ENCODE measurements at regions of chr13 and their contacts with region 1.

Region 1: GRCh38 chr13:44969551-44970484 is 19.5 kb downstream of the NUFIP1 start:
- DNase-seq: peak; percentile 53
- H3K4me3 ChIP-seq: no peak overlapping the region
- H3K27ac ChIP-seq: peak overlapping the region; percentile 1 to 45; a peak in 2 of 4 replicates
- H3K4me1 ChIP-seq: peaks cover 0 to 17% of the 10 kb centered on the region in 2 experiments; a peak in 2 of 4 replicates
- H3K27me3 ChIP-seq: no peaks in the 10 kb centered on the region
- CTCF ChIP-seq: peak; percentile 89
- EP300 ChIP-seq: no peak
- RAD21 ChIP-seq: peak; percentile 90

Region 2: GRCh38 chr13:44404261-44405132 is 565.3 kb before region 1 on chr13:
- CTCF ChIA-PET with region 1: no interaction called
- POLR2A ChIA-PET with region 1: no interaction called
- DNase-seq: peak; percentile 80
- H3K4me3 ChIP-seq: no peak overlapping the region
- H3K27ac ChIP-seq: peak overlapping the region in 1 of 2 experiments; percentile 96; a peak in 2 of 4 replicates
- H3K4me1 ChIP-seq: peaks cover 0 to 36% of the 10 kb centered on the region in 2 experiments; a peak in 2 of 4 replicates
- H3K27me3 ChIP-seq: no peaks in the 10 kb centered on the region
- CTCF ChIP-seq: no peak
- EP300 ChIP-seq: peak in 1 of 2 experiments; percentile 67; a peak in 1 of 4 replicates
- RAD21 ChIP-seq: no peak

Region 3: GRCh38 chr13:44938854-44939253 is 31.0 kb before region 1 on chr13:
- CTCF ChIA-PET with region 1: interaction called, 10 read pairs
- POLR2A ChIA-PET with region 1: no interaction called
- DNase-seq: no peak
- H3K4me3 ChIP-seq: no peak overlapping the region
- H3K27ac ChIP-seq: no peak overlapping the region
- H3K4me1 ChIP-seq: peaks cover 0 to 8% of the 10 kb centered on the region in 2 experiments
- H3K27me3 ChIP-seq: no peaks in the 10 kb centered on the region
- CTCF ChIP-seq: no peak
- EP300 ChIP-seq: no peak
- RAD21 ChIP-seq: no peak

Region 4: GRCh38 chr13:44955406-44955805 is 14.4 kb before region 1 on chr13:
- CTCF ChIA-PET with region 1: interaction called, 24 read pairs
- POLR2A ChIA-PET with region 1: no interaction called
- DNase-seq: no peak
- H3K4me3 ChIP-seq: no peak overlapping the region
- H3K27ac ChIP-seq: no peak overlapping the region
- H3K4me1 ChIP-seq: peaks cover 0 to 4% of the 10 kb centered on the region in 2 experiments; a peak in 1 of 4 replicates
- H3K27me3 ChIP-seq: no peaks in the 10 kb centered on the region
- CTCF ChIP-seq: no peak
- EP300 ChIP-seq: no peak
- RAD21 ChIP-seq: no peak

Region 5: DNA sequence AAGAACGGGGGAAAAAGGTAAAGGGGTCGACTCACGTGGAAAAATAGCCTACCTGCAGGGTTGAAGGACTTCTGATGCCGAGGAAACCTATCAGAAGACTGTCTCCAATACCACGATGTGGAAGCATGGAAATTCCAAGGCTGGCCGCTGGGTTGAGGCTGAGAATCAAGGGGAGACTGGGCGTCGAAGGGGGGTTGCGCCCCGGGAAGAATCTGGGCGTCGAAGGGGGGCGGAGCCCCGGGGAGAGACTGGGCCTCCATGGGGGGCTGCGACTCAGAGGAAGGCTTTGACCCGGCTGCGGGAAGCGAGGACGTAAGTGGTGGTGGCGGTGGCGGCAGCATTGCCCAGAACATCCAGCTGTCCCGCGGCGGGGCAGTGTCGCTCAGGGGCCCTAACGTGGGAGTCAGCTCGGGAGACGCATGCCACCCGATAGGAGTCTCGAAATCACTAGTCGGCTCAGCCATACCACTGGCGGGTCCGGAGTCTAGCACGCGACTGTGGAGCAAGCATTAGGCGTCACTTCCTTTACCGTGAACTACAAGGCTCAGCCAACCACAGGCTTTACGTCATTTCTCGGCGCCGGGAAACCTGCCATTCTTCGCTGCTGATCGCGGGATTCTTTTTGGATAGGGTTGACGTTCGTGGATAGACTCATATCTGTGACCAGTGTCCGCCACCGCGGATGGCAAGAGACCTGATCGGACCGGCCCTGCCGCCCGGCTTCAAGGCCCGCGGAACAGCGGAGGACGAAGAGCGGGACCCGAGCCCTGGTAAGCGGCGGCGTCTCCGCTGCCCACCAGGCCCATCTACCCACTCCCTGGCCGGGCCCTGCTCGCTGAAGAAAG is 19.4 kb after region 1 on chr13 and contains the starts of genes GPALPP1 and NUFIP1:
- CTCF ChIA-PET with region 1: interaction called, 13 read pairs
- POLR2A ChIA-PET with region 1: interaction called, 4 read pairs
- DNase-seq: peak; percentile 94
- H3K4me3 ChIP-seq: peak within 1 kb of the TSS; percentile 89 to 97
- H3K27ac ChIP-seq: peak within 1 kb of the TSS; percentile 69 to 83
- H3K4me1 ChIP-seq: peaks cover 0 to 15% of the 10 kb centered on the region in 2 experiments; a peak in 3 of 4 replicates
- H3K27me3 ChIP-seq: no peaks in the 10 kb centered on the region
- CTCF ChIP-seq: 0 out of 2 replicates have a peak, but pooled peaks have one; percentile 10
- EP300 ChIP-seq: no peak
- RAD21 ChIP-seq: no peak
- polyA plus RNA-seq, gene GPALPP1: 11.7 and 16.6 TPM in 2 replicates
- polyA plus RNA-seq, gene NUFIP1: 1.8 and 1.9 TPM in 2 replicates

Region 6: GRCh38 chr13:45036206-45036605 is 66.4 kb after region 1 on chr13:
- CTCF ChIA-PET with region 1: no interaction called
- POLR2A ChIA-PET with region 1: no interaction called
- DNase-seq: no peak
- H3K4me3 ChIP-seq: no peak overlapping the region
- H3K27ac ChIP-seq: no peak overlapping the region
- H3K4me1 ChIP-seq: no peaks in the 10 kb centered on the region
- H3K27me3 ChIP-seq: no peaks in the 10 kb centered on the region
- CTCF ChIP-seq: no peak
- EP300 ChIP-seq: no peak
- RAD21 ChIP-seq: no peak